ENCODE measurements at regions of chr10 and their contacts with region 1.

Region 1: GRCh38 chr10:62610649-62611229 is 193.8 kb upstream of the ADO start:
- DNase-seq: peak; percentile 35 to 53
- ATAC-seq: peak; percentile 66 to 89; a peak in 5 of 6 replicates
- H3K4me3 ChIP-seq: no peak overlapping the region
- H3K27ac ChIP-seq: no peak overlapping the region
- H3K4me1 ChIP-seq: peaks cover 17% of the 10 kb centered on the region; the same call in 2 of the 3 replicates
- CTCF ChIP-seq: peak; percentile 44
- EP300 ChIP-seq: no peak
- POLR2A ChIP-seq: no peak
- RAD21 ChIP-seq: peak; percentile 70 to 81

Region 2: DNA sequence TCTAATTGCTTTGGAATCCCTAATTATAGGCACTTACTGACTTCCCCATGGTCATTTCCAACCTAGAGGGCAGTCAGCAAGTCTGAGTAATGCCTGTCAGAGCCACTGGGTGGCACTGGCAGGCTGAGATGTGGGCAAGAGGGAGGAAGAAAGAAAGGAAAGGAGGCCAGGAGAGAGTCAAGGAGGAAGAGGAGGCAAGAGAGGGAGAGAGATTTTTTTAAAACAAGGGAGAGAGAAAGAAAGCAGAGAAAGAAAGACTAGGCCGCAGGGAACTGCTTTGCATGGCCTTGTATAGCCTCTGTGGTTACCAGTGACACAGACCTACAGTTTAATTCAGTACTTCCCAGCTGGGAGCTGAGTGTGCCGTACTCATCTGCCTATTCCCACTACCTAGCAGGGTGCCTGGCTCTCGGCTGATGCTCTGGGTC is 16.6 kb before region 1 on chr10:
- CTCF ChIA-PET with region 1: interaction called, 10 read pairs
- POLR2A ChIA-PET with region 1: no interaction called
- DNase-seq: peak; percentile 26 to 58
- ATAC-seq: peak; percentile 94 to 98
- H3K4me3 ChIP-seq: no peak overlapping the region
- H3K27ac ChIP-seq: no peak overlapping the region
- H3K4me1 ChIP-seq: no peaks in the 10 kb centered on the region
- CTCF ChIP-seq: peak; percentile 84
- EP300 ChIP-seq: no peak
- POLR2A ChIP-seq: no peak
- RAD21 ChIP-seq: peak; percentile 88 to 96

Region 3: DNA sequence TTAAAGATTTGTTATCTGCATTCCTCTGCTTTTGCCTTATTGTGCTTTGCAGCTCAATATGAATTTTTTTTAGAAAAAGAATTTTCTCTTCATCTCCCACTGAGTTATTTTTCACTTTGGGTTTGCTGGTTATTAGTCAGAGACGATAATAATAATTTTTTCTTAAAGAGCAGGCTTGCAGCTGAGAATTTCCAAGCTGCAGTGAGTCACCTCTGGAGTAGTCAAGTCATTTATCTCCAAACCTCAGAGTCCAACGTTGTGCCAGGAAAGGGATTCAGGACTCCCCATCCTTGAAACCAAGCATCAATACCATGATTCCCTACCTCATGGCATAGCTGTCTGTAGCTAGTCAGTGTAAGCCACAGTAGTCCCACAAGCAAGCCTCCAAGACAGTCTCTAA is 220.6 kb after region 1 on chr10:
- CTCF ChIA-PET with region 1: interaction called, 11 read pairs
- POLR2A ChIA-PET with region 1: no interaction called
- DNase-seq: no peak
- ATAC-seq: no peak
- H3K4me3 ChIP-seq: no peak overlapping the region
- H3K27ac ChIP-seq: no peak overlapping the region
- H3K4me1 ChIP-seq: no peaks in the 10 kb centered on the region
- CTCF ChIP-seq: no peak
- EP300 ChIP-seq: no peak
- POLR2A ChIP-seq: no peak
- RAD21 ChIP-seq: no peak